Endothelial cell of umbilical vein (primary cell): ENCODE measurements at regions of chr7 and their contacts with region 1.

Region 1: DNA sequence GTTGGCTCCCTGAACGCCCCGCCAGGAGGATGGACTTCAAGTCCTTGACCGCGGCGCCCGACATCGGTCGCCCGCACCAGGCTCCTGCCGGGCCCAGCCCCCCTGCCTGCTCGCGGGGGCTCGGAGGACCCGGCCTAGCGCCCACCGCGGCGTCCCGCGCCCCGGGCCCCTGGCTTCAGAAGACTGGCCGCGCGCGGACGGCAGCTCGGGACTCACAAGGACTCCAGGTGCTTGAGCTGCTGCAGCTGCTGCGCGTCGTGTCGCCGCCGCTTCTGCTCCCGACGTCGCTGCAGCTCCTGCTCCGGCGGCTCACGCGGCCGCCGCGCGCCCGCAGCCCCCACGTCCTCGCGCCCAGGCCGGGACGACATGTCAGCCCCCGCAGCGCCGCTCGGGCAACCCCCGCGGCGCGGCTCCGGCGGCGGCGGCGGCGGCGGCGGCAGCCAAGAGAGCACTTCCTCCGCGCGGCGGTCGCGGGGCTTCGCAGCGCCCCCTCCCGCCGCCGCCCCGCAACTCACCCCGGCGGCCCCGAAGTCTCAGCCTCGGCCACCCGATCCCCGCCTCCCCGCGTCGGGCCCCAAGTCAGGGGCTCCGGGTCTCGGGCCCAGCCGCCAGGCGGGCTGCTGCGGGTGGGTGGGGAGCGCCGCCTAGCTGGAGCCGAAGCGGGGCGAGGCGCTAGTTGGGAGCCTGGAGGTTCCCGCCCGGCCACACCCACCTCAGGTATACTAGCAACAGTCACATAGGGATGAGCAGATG is at the start of gene RP9:
- DNase-seq: peak; percentile 70
- H3K4me3 ChIP-seq: peak within 1 kb of the TSS; percentile 56 to 93 (median 75)
- H3K27ac ChIP-seq: peak within 1 kb of the TSS; percentile 40
- H3K4me1 ChIP-seq: peaks cover 21% of the 10 kb centered on the region
- H3K27me3 ChIP-seq: peaks cover 4 to 18% of the 10 kb centered on the region in 2 experiments
- CTCF ChIP-seq: peak; percentile 41 to 58
- POLR2A ChIP-seq: peak; percentile 46
- total RNA-seq, gene RP9: 18.5 and 20.9 TPM in 2 replicates

Region 2: GRCh38 chr7:32495298-32496176 is 613.6 kb before region 1 on chr7 and contains the start of gene AVL9:
- CTCF ChIA-PET with region 1: no interaction called
- POLR2A ChIA-PET with region 1: no interaction called
- dilution Hi-C with region 1: no loop called
- intact Hi-C with region 1: loop called (anchors 2 kb)
- DNase-seq: peak; percentile 96
- H3K4me3 ChIP-seq: peak within 1 kb of the TSS; percentile 89 to 100 (median 100)
- H3K27ac ChIP-seq: peak within 1 kb of the TSS; percentile 82
- H3K4me1 ChIP-seq: peaks cover 13% of the 10 kb centered on the region
- H3K27me3 ChIP-seq: no peaks in the 10 kb centered on the region
- CTCF ChIP-seq: no peak
- POLR2A ChIP-seq: peak; percentile 97
- total RNA-seq, gene AVL9: 42.5 and 44.1 TPM in 2 replicates

Region 3: DNA sequence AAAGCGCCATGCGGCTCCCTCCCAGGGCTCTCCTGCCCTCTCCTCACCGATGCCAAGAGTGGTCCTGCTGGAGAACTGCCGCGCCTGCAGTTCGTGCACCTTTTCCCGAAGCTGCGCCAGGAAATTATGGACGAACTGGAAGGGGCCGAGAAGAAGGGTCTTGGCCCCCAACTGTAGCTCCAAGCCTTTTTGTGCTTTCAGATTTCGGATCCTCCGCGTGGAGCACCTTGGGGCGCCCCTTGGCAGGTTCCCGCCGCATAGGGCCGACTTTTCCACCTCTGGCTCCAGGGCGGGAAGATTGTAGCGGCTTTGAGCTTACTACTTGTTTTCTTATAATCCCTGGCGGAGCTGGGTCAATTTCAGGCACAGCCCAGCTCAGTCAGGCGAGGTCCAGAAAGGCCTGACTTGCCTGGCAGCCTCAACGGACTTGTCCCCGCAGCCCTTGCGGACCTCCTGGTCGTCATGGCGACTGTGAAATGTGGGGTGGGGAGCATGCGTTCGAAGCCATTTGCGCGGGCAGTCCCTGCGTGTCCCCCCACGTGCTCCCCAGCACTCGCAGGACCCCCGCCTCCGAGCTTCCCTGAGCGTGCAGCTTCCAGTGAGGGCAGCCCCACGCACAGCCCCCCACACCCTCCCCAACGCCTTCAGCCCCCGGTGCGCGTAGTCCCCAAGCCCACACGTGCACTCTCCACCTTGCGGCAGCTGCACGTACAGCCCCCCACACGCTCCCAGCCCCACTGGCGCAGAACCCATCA is 347.6 kb before region 1 on chr7:
- CTCF ChIA-PET with region 1: interaction called, 43 read pairs
- POLR2A ChIA-PET with region 1: no interaction called
- dilution Hi-C with region 1: no loop called
- intact Hi-C with region 1: loop called (anchors 1 kb)
- DNase-seq: peak; percentile 7
- H3K4me3 ChIP-seq: peak overlapping the region in 2 of 3 experiments; percentile 32 to 36
- H3K27ac ChIP-seq: no peak overlapping the region
- H3K4me1 ChIP-seq: peaks cover 8% of the 10 kb centered on the region
- H3K27me3 ChIP-seq: peaks cover 0 to 3% of the 10 kb centered on the region in 2 experiments
- CTCF ChIP-seq: peak in 1 of 2 donors; percentile 10
- POLR2A ChIP-seq: no peak

Region 4: DNA sequence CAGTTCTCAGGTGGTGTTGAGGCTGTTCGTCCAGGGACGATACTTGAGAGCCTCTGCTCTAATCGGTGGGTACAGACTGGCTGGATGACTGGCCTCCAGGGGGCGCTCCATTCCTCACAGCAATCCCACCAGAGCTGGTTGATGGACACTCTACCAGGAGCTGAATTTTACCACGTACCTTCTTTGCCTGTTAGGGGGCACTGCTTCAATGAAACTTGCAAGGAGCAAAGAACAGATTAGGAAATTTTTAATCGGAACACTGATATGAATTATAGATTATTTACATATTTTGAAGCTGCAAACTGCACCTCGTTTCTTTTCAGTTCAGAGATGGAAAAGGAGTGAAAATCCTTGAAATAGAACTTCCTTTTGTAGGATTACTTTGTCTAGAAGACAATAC is 262.5 kb before region 1 on chr7:
- CTCF ChIA-PET with region 1: interaction called, 45 read pairs
- POLR2A ChIA-PET with region 1: no interaction called
- dilution Hi-C with region 1: no loop called
- intact Hi-C with region 1: loop called (anchors 1 kb)
- DNase-seq: peak; percentile 79
- H3K4me3 ChIP-seq: no peak overlapping the region
- H3K27ac ChIP-seq: no peak overlapping the region
- H3K4me1 ChIP-seq: no peaks in the 10 kb centered on the region
- H3K27me3 ChIP-seq: no peaks in the 10 kb centered on the region
- CTCF ChIP-seq: peak; percentile 73 to 88
- POLR2A ChIP-seq: no peak

Region 5: GRCh38 chr7:32942786-32943653 is 166.2 kb before region 1 on chr7:
- CTCF ChIA-PET with region 1: interaction called, 11 read pairs
- POLR2A ChIA-PET with region 1: no interaction called
- dilution Hi-C with region 1: no loop called
- intact Hi-C with region 1: loop called (anchors 5 kb)
- DNase-seq: peak; percentile 78
- H3K4me3 ChIP-seq: peak overlapping the region; percentile 84 to 93 (median 92)
- H3K27ac ChIP-seq: peak overlapping the region; percentile 73
- H3K4me1 ChIP-seq: peaks cover 10% of the 10 kb centered on the region
- H3K27me3 ChIP-seq: no peaks in the 10 kb centered on the region
- CTCF ChIP-seq: peak; percentile 59 to 66
- POLR2A ChIP-seq: peak; percentile 7

Region 6: GRCh38 chr7:33062782-33063443 is 46.3 kb before region 1 on chr7:
- CTCF ChIA-PET with region 1: interaction called, 24 read pairs
- POLR2A ChIA-PET with region 1: interaction called, 4 read pairs
- dilution Hi-C with region 1: no loop called
- intact Hi-C with region 1: loop called (anchors 2 kb)
- DNase-seq: peak; percentile 96
- H3K4me3 ChIP-seq: peak overlapping the region; percentile 56 to 87 (median 81)
- H3K27ac ChIP-seq: peak overlapping the region; percentile 81
- H3K4me1 ChIP-seq: peaks cover 15% of the 10 kb centered on the region
- H3K27me3 ChIP-seq: no peaks in the 10 kb centered on the region
- CTCF ChIP-seq: no peak
- POLR2A ChIP-seq: peak; percentile 52

Region 7: DNA sequence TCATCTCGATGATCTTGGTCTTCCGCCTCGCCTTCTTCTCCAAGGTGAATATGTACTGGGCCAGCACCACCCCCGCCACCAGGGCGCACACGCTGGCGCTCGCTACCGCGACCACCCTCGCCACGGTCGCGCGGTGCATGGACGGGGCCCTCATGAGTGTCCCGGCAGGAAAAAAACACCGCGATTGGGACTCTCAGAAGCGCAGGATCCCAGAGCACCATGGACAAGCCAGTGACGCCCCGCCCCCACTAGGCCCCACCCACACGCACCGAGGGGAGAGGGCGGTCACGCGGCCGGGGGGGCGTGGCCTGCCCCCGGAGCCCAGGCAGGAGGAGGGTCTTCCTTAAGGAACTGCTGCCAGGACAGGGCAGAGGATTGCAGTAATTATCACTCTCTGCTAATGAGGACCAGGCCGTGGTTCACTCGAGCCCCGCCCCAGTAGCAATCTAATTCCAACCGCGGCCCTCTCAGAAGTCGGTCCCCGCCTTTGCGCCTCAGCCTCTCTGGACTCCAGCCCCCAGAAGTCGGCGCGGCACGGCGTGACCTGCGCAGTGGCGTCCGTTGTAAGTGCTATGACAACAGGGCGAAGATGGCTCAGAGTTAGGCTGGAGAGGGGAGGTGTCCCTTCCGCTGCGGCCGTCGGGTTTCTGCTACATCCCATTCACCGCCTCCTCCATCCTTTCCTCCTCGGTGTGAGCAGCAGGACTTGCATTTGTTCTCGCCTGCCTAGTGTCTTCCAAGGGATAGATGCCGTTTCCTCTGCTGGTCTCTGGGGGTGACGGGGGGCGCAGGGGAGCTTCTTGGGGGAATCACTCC is 20.0 kb after region 1 on chr7 and contains the start of gene BBS9:
- CTCF ChIA-PET with region 1: interaction called, 4 read pairs
- POLR2A ChIA-PET with region 1: no interaction called
- dilution Hi-C with region 1: no loop called
- intact Hi-C with region 1: loop called (anchors 1 kb)
- DNase-seq: peak; percentile 96
- H3K4me3 ChIP-seq: peak within 1 kb of the TSS; percentile 48 to 85 (median 71)
- H3K27ac ChIP-seq: no peak within 1 kb of the TSS
- H3K4me1 ChIP-seq: peaks cover 8% of the 10 kb centered on the region
- H3K27me3 ChIP-seq: no peaks in the 10 kb centered on the region
- CTCF ChIP-seq: no peak
- POLR2A ChIP-seq: peak; percentile 64
- total RNA-seq, gene BBS9: 14.1 and 17.4 TPM in 2 replicates

Region 8: GRCh38 chr7:33392148-33392547 is 283.0 kb after region 1 on chr7:
- CTCF ChIA-PET with region 1: no interaction called
- POLR2A ChIA-PET with region 1: no interaction called
- dilution Hi-C with region 1: no loop called
- intact Hi-C with region 1: no loop called
- DNase-seq: no peak
- H3K4me3 ChIP-seq: no peak overlapping the region
- H3K27ac ChIP-seq: no peak overlapping the region
- H3K4me1 ChIP-seq: no peaks in the 10 kb centered on the region
- H3K27me3 ChIP-seq: no peaks in the 10 kb centered on the region
- CTCF ChIP-seq: no peak
- POLR2A ChIP-seq: no peak